ENCODE measurements at regions of chr12 and their contacts with region 1.

Region 1: DNA sequence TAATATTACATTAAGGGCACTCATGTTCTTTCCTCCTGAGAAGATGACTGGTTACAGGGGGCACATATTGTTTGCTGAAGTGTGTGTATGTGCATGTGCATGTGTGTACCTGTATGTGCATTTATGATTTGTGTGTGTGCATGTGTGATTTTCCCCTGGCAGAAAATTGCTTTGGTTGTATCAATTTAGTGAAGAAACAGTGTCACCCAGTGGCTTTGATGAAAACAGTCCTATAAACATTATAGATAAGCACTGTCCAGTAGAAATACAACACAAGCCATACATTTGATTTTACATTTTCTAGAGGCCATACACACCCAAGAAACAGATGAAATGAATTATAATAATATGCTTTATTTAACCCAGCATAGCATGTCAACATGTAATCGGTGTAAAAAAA is 8.6 kb downstream of the PDE3A start:
- DNase-seq: no peak
- ATAC-seq: peak in 1 of 2 donors; percentile 30

Region 2: DNA sequence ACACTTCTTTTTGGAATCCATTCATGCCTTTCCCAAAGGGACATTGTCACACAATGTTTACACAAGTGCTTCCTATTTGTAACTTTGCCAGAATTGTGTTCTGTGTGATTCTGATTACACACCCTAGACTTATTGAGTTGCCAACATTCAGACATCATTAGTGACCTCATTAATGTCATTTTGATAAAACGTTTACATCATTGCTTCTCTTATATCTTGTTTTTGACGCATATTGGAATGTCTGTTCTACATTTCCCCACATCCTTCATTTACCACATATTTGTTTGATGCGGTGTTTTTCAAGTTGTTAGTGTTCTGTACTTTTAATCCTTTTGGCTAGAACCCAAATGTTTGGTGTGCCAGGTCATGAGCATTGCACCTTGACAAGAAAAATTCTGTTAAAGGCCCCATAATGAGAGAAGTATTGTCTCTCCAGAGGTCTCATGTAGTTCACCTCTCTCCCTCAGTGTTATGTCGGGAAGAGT is 632.2 kb before region 1 on chr12:
- intact Hi-C with region 1: loop called in 1 of 2 experiments (anchors 5 kb)
- DNase-seq: no peak
- ATAC-seq: peak; percentile 71 to 86

Region 3: GRCh38 chr12:20319366-20319765 is 57.6 kb before region 1 on chr12:
- intact Hi-C with region 1: no loop called
- DNase-seq: no peak
- ATAC-seq: peak; percentile 75 to 81

Region 4: DNA sequence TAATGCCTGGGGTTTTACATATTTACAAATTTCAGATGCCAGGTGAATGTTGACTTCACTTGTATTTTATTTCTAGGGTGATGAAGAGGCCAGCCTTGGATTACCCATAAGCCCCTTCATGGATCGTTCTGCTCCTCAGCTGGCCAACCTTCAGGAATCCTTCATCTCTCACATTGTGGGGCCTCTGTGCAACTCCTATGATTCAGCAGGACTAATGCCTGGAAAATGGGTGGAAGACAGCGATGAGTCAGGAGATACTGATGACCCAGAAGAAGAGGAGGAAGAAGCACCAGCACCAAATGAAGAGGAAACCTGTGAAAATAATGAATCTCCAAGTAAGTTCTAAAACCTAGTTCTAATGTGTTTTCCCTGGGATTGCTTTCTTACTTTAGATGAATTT is 276.9 kb after region 1 on chr12:
- intact Hi-C with region 1: no loop called
- DNase-seq: no peak
- ATAC-seq: no peak

Measured in left cardiac atrium (tissue), 4 donors.